ENCODE measurements at regions of chr5 and their contacts with region 1.

Region 1: GRCh38 chr5:177311723-177312648 is at the start of gene MXD3:
- DNase-seq: peak; percentile 97 to 98
- ATAC-seq: peak; percentile 87
- total RNA-seq, gene MXD3: 8.3 to 12.9 TPM

Region 2: DNA sequence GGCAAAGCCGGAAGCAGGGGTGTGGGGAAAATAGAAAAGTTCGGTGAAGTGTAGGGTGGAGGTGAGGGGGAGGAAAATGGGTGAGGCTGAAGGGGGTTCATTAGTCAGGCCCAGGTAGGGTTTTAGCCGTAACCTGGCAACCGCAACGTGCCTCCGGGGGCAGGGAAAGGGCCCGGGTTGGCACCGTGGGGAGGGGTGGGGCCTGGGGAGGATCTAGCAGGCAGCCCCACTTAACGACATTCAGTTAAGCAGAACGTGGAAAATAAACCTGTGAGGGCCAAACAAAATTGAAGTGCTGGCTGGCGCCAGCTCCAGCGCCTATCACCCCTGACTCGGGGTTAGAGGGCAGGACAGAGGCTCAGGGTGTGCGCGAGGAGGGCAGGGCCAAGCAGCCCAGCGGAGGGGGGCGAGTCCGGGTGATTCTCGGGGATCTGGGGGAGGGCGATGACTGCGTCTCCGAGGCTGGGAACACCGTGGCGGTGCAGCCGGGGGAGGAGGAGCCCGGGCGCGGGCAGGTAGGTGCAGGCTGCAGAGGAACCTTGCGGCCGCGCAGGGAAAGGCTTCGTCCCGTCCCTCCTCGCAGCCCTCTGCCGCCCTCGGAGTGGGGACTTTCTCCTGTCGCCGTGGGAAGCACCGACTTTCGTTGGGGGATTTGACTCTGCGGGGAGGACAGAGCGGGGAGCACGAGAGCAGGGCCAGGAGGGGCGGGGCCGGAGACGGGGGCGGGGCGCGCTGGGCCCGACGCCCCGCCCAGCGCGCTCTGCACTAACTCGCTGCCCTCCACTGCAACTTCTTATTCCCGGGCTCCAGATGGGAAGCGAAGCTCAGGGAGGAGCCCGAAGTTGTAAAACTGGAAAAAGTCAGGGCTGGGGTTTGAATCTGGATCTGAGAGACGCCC is 50.9 kb after region 1 on chr5:
- intact Hi-C with region 1: loop called in 1 of 2 experiments (anchors 10 kb)
- DNase-seq: peak; percentile 70 to 81
- ATAC-seq: peak; percentile 75

Measured in left colon (tissue), 2 donors.